K562 (cell line): ENCODE measurements at regions of chr11 and their contacts with region 1.

Region 1: DNA sequence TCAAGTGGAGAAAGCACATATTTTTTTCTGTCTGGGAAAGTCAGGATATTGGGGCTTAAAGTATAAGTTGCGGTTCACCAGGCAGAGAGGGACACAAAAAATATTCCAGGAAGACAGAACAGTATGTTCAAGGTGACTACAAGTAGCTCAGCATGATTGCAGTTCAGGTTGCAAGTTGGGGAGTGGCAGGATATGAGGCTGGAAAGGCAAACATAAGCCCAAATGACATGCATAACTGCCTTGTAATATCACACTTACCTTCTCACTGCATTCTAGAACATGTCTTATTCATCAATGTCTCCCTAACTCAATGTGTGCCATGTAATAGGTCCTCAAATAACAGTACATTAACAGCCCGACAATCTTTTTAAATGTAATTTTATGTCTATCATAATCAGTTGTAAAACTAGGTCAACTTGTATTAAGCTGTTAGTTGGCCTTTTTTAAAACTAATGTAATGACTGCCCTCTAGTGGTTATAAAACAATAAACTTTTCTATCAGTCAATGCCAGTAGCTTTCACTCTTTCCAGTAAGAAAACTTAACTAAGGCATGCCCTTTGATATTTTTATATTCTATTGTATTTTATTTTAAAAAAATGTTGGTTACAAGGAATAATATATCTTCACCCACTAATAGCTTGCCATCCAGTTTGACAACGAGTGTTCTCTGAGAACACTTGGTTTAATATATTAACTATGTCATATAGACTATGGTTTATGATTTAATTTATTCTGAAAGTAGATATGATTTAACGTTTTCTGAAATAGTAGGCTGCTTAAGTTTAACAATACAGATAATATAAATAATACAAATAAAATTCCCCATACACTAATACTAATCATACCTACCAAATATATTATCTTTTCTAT is 39.4 kb upstream of the CFAP300 start:
- DNase-seq: peak; percentile 12 to 36 (median 23)
- ATAC-seq: peak; percentile 63; the same call in 1 of the 3 replicates
- H3K4me3 ChIP-seq: no peak overlapping the region
- H3K27ac ChIP-seq: no peak overlapping the region
- H3K4me1 ChIP-seq: no peaks in the 10 kb centered on the region
- H3K27me3 ChIP-seq: no peaks in the 10 kb centered on the region
- CTCF ChIP-seq: peak; percentile 22 to 56 (median 31); a peak in 4 of 6 replicates
- EP300 ChIP-seq: no peak
- POLR2A ChIP-seq: no peak
- RAD21 ChIP-seq: peak; percentile 49 to 64

Region 2: DNA sequence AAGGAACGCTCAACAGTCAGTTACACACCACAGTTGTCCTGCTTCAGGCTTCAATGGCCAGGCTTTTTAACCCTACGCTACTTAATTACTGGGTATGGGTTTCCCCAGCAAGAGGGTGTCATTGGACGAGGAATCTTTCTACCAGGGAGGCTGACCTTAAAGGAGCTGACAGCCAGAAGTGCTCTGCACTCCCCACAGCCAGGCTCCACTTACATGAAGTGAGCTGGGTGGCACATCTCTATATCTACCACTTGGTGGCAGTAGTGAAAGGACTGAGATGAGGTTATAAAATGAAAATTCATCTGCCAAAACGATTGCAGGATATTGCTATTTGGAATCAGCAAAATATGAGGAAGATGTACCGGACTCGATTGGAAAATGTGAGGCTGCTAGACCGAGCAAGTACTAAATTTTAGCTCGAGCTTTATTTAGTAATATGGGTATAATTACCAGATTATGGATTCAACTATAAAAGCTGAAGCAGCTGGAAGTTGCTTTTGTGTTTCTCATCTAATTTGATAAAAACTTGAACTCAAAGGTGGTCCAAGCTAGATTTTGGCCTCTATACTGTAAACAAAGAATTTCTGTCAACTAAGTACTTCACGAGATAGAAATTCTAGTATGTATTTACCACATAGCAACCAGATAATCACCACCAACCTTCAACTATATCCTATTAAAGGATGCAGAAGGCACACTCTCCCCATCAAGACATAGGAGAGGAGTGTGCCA is 146.9 kb before region 1 on chr11:
- CTCF ChIA-PET with region 1: interaction called, 3 read pairs
- POLR2A ChIA-PET with region 1: no interaction called
- in situ Hi-C with region 1: no loop called
- intact Hi-C with region 1: loop called (anchors 2 kb)
- DNase-seq: peak; percentile 7 to 16 (median 10)
- ATAC-seq: peak; percentile 63
- H3K4me3 ChIP-seq: no peak overlapping the region
- H3K27ac ChIP-seq: no peak overlapping the region
- H3K4me1 ChIP-seq: no peaks in the 10 kb centered on the region
- H3K27me3 ChIP-seq: no peaks in the 10 kb centered on the region
- CTCF ChIP-seq: peak; percentile 22 to 43 (median 39); a peak in 3 of 6 replicates
- EP300 ChIP-seq: no peak
- POLR2A ChIP-seq: no peak
- RAD21 ChIP-seq: peak in 1 of 2 experiments; percentile 40; a peak in 2 of 4 replicates

Region 3: DNA sequence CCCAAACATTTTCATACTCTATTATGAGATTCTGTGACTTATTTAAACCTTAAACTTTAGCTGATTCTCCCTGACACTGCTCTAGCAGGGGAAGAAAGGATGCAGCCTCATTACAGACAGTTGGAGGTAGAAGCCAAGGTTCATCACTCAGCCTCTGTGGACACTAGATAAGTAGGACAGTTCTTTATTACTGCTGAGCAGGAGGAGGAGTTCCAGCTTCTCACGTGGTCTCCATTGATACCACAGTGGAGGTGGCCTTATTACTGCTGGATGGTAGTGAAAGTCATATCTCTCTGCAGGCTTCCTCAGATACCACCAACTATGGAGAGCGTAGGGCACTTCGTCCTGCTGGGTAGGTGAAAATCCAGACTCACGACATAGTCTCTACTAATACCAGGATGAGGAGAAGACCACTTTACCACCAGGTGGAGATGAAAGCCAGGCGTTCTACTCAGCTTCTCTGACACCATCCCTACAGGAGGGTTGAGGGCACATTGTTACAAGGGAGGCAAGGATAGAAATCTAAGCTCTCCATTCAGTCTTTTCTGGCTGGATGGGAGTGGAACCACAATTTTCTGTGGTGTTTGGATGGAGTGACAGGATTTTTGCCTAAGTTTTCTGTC is 78.4 kb before region 1 on chr11:
- CTCF ChIA-PET with region 1: no interaction called
- POLR2A ChIA-PET with region 1: no interaction called
- in situ Hi-C with region 1: no loop called
- intact Hi-C with region 1: no loop called
- DNase-seq: no peak
- ATAC-seq: no peak
- H3K4me3 ChIP-seq: no peak overlapping the region
- H3K27ac ChIP-seq: no peak overlapping the region
- H3K4me1 ChIP-seq: no peaks in the 10 kb centered on the region
- H3K27me3 ChIP-seq: no peaks in the 10 kb centered on the region
- CTCF ChIP-seq: no peak
- EP300 ChIP-seq: no peak
- POLR2A ChIP-seq: no peak
- RAD21 ChIP-seq: no peak